ENCODE measurements at regions of chr2 and their contacts with region 1.

Region 1: GRCh38 chr2:120026890-120027289 is 14.0 kb downstream of the EPB41L5 start:
- DNase-seq: no peak
- H3K4me3 ChIP-seq: no peak overlapping the region
- H3K27ac ChIP-seq: no peak overlapping the region
- H3K4me1 ChIP-seq: no peaks in the 10 kb centered on the region
- H3K27me3 ChIP-seq: no peaks in the 10 kb centered on the region
- CTCF ChIP-seq: peak in 1 of 2 donors; percentile 9

Region 2: DNA sequence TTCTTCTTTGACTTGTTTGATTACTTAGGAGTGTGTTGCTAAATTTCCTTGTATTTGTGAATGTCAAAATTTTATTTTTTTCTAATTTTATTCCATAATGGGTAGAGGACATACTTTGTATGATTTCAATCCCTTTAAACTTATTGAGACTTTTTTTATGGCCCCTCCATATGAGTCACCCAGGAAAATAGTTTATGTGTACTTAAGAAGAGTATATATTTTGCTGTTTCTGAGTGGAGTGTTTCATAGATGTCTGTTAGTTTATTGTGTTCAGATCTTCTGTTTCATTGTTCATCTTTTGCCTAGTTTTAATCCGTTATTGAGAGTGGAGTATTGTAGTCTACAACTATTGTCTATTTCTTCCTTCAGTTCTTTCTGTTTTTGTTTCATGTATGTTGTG is 67.9 kb after region 1 on chr2:
- CTCF ChIA-PET with region 1: no interaction called
- dilution Hi-C with region 1: no loop called
- in situ Hi-C with region 1: no loop called
- intact Hi-C with region 1: loop called (anchors 2 kb)
- DNase-seq: no peak
- H3K4me3 ChIP-seq: no peak overlapping the region
- H3K27ac ChIP-seq: no peak overlapping the region
- H3K4me1 ChIP-seq: no peaks in the 10 kb centered on the region
- H3K27me3 ChIP-seq: no peaks in the 10 kb centered on the region
- CTCF ChIP-seq: no peak